ENCODE measurements at regions of chr10 and their contacts with region 1.

Region 1: DNA sequence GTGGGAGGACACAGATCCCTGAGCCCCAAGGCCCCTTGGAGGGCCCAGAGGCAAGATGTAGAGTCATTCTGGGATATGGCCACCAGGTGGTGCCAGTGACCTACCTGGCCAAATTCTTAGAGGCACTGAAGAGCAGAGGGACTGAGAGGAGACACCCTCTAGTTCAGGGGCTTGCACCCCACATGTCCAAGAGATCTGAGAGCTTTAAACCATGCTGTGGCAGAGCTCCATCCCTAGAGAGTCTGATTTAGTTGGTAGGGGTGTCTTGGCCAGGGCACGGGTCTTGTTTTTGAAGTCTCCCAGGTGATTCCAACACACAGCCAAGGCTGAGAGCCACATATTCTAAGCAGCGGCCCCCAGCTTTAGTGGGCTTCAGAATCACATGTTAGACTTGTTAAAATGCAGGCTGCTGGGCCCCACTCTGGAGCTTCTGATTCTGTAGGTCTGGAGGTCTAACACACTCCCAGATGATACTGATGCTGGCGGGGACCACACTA is 52.5 kb downstream of the PRF1 start:
- DNase-seq: no peak
- H3K4me3 ChIP-seq: no peak overlapping the region
- CTCF ChIP-seq: peak; percentile 83

Region 2: DNA sequence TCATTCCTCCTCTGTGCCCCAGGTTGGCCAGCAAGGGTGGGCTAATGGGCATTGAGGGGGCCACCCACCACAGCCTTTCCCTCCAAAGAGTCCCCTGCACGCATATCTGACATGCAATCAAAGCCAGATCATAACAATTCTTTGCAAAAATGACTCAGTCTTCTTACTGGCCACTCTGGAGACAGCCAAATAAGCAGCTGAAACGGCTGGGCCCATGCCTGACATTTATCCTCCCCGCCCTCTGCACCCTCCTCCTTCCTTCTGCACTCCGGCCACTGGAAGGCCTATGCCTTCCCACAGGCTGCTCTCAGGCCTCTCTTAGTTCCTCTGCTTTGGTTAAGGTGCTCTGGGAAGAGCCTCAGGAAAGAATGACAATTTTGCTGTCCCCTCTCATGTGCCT is 237.0 kb before region 1 on chr10:
- CTCF ChIA-PET with region 1: no interaction called
- POLR2A ChIA-PET with region 1: no interaction called
- DNase-seq: no peak
- H3K4me3 ChIP-seq: no peak overlapping the region
- CTCF ChIP-seq: no peak

Region 3: DNA sequence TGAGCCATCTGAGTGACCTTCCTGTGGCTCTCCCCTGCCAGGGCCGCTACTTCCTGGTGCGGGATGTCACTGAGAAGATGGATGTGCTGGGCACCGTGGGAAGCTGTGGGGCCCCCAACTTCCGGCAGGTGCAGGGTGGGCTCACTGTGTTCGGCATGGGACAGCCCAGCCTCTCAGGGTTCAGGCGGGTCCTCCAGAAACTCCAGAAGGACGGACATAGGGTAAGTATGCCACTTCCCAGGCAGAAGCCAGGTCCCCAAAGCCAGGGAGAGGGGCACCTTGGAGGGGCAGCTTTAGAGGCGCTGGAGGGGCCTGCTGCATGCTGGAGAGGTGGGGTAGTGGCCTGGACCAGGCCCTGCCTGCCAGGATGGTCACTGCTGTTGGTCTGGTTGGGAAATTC is 20.2 kb before region 1 on chr10:
- CTCF ChIA-PET with region 1: interaction called, 33 read pairs
- POLR2A ChIA-PET with region 1: no interaction called
- DNase-seq: no peak
- H3K4me3 ChIP-seq: no peak overlapping the region
- CTCF ChIP-seq: no peak

Region 4: DNA sequence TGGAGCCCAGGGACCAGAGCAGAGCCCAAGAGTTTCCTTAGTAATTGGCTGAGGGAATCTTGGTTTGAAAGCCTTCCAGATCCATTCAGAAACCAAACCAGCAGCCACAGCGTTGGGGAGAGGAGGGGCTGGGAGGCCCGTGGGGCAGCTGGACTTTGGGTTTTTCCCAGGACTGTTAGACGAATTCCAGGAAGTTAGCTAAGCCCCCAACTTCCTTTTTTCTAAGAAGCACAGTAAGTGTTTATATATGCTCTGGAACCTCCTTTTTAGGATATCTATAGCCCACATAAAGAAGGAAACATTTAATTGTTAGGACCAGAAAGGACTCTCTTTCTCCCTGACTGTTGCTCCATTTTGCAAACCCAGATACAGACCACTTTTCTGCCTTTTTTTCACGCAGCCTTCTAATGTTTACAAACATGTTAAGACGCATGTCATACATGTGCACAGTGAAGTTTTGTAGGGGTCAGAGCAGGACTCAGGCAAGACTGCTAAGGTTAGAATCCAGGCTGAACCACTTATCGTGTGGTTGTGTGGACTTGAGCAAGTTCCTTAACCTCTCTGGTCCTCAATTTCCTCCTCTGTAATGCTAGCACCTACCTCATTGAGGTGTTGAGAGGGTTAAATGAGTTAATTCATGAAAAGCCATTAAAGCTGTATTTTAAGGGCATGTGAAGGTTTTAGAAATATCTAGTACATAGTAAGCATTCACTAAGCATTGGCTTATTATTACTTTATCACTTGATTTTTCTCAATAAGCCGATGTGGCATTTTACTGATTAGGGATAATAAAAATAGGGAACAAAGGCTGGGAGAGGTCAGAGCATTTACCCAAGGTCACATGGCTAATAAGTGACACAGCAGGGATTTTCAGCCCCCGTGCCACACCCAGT is 192.8 kb after region 1 on chr10:
- CTCF ChIA-PET with region 1: interaction called, 17 read pairs
- POLR2A ChIA-PET with region 1: no interaction called
- DNase-seq: peak; percentile 53
- H3K4me3 ChIP-seq: no peak overlapping the region
- CTCF ChIP-seq: no peak

Region 5: DNA sequence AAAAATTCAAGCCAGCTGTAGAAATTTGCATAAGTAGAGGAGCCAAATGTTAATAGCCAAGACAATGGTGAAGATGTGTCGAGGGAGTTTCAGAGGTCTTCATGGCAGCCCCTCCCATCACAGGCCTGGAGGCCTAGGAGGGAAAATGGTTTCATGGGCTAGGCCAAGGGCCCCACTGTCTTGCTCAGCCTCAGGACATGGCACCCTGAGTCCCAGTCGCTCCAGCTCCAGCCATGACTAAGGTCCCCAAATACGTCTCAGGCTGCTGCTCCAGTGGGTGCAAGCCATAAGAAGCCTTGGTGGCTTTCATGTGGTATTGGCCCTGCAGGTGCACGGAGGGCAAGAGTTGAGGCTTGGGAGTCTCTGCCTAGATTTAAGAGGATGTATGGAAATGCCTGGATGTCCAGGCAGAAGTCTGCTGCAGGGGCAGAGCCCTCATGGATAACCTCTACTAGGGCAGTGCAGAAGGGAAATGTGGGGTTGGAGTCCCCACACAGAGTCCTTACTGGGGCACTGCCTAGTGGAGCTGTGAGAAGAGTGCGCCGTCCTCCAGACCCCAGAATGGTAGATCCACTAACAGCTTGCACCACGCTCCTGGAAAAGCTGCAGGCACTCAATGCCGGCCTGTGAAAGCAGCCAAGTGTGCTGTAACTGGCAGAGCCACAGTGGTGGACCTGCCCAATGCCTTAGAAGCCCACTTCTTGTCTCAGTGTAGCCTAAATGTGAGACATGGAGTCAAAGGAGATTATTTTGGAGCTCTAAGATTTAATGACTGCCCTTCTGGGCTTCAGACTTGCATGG is 216.0 kb after region 1 on chr10:
- CTCF ChIA-PET with region 1: interaction called, 496 read pairs
- POLR2A ChIA-PET with region 1: no interaction called
- DNase-seq: no peak
- H3K4me3 ChIP-seq: no peak overlapping the region
- CTCF ChIP-seq: no peak

Region 6: DNA sequence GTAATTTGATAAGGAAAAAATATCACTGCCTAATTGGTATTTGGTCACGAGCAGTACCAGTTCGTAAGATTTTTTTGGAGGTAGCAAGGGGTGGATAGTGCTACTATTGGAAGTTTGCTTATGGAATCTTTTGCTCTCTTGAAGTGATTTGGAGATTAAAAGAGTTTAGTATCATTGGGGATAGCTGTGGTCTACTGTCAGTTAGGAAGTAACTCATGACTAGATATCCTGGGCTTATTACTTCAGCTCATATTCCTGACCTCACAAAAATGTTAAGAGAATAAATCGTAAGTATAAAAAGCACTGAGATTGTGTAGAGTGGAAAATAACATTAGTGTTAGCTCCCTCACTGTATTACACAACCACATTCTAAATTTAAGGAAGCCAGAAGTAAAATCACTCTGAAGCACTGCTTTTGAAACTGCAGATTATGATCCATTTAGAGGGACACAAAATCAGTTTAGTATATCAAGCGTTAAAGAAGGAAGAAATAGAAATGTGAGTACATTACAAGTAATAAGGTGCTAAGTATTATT is 288.3 kb after region 1 on chr10:
- CTCF ChIA-PET with region 1: interaction called, 12 read pairs
- POLR2A ChIA-PET with region 1: no interaction called
- DNase-seq: no peak
- H3K4me3 ChIP-seq: no peak overlapping the region
- CTCF ChIP-seq: no peak

Region 7: DNA sequence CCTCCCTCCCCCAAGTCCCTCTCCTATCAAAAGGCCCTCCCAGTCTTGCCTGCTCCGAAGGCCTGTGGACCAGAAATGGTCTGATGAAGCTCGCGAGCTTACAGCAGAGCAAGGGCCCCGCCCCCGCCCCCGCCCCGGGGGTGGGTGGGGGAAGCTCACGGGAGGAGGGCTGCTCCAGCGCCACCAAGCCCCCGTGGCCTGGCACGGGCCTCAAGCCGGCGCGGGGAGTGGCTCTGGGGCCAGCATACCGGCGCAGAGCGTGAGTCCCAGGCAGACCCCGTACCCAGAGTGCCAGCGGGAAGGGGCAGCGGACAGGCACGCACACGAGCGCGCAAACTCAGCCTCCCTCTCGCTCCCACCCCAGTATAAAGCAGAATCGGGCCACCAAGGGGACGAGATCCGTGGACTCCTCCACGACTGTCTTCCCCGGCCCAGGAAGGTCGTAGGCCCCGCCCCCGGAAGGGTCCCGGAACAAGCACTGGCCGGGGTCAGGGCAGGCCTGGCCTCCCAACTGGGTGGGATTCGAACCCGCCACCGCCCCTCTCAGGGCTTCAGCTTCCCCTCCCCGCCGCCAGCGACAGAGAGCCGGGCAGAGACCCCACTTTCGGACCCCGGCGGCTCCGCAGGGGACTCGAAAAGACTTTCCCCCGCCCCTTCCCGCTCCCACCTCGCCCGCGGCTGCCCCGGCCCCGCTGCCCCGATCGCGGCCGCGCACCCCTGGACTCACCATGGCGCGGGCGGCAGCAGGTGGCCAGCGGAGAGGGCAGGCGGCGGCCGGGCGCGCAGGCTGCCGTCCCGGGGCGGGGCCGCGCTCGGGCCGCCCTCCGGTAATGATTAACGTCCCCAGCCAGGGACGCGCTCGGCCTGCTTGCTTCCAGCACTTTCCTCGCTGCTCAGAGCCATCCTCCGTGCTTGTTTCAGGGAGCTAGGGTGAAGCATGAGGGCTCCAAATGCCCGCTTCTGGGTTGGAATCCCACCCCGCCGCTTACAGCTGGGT is 338.1 kb after region 1 on chr10 and contains the start of gene PCBD1:
- CTCF ChIA-PET with region 1: interaction called, 17 read pairs
- POLR2A ChIA-PET with region 1: no interaction called
- DNase-seq: no peak
- H3K4me3 ChIP-seq: peak within 1 kb of the TSS; percentile 68
- CTCF ChIP-seq: no peak